Aorta (tissue), 5 donors: ENCODE measurements at regions of chr14 and their contacts with region 1.

Region 1: GRCh38 chr14:100440187-100440631 is 117.1 kb downstream of the SLC25A47 start:
- DNase-seq: peak in 1 of 2 donors; percentile 67
- ATAC-seq: peak; percentile 85
- H3K4me3 ChIP-seq: no peak overlapping the region
- H3K27ac ChIP-seq: no peak overlapping the region
- H3K4me1 ChIP-seq: no peaks in the 10 kb centered on the region
- H3K27me3 ChIP-seq: no peaks in the 10 kb centered on the region

Region 2: DNA sequence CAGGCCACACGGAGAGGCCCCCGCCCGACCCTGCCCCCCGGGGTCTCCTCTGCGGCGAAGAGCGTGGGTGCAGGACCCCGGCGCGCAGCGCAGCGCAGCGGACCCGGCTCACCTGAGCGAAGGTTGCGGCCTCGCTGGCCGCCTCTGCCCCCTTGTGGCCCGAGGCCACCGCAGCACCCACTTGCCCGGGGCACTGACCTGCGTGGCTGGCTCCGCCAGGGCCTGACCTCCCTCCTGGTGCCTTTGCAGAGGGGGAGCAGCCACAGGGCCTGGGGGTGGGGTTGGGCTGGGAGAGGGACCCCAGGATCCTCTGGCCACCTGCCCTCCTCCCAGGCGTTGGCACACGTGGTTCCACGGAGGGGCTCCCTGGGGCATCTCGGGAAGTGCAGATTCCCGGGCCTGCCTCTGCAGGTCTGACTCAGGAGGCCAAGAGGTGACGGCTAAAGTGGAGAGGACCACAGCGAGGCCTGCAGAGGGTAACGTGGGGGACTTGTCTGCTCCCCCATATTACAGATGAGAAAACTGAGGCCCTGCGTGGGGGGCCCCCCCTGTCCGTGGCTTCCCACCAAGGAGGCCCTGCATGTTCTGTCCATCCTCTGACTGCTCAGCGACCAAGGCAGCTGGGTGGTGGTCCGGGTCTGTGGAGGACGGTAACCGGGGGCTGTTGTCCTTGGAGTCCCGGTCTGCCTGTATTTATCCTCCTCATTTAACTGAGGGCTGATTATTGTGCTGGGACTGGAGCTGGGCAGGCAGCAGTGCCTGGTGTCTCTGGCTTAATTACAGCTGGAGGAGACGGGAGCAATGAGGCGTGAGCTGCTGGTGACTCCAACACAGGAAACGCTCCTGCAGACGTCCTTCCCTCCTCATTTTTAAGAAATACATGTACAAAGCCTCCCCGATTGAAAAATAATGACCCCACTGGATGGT is 214.9 kb after region 1 on chr14:
- intact Hi-C with region 1: loop called in 1 of 2 experiments (anchors 5 kb)
- DNase-seq: no peak
- ATAC-seq: peak; percentile 46
- H3K4me3 ChIP-seq: no peak overlapping the region
- H3K27ac ChIP-seq: no peak overlapping the region
- H3K4me1 ChIP-seq: no peaks in the 10 kb centered on the region
- H3K27me3 ChIP-seq: no peaks in the 10 kb centered on the region